ENCODE measurements at regions of chr16 and their contacts with region 1.

Region 1: DNA sequence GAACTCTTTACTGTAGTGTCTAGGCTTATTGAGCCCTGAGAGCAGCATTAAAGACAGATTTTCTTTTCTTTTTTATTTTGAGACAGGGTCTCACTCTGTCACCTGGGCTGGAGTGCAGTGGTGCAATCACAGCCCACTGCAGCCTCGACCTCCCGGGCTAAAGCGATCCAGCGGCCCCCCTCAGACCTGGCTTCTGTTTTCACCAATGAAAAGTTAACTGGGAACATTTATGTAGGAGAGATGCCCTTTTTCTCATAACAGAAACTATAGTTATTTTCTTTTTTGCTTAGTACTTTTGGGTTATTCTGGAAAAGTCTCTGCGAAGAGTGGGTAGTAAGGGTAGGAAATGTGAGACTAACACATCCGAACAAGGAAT is 1.5 kb downstream of the MAP1LC3B start:
- DNase-seq: no peak
- ATAC-seq: no peak
- H3K4me3 ChIP-seq: peak overlapping the region in 4 of 5 experiments; percentile 57 to 79 (median 70)
- H3K4me3 Mint-ChIP-seq: peak overlapping the region; percentile 94
- H3K27ac ChIP-seq: peak overlapping the region in 1 of 2 donors; percentile 95
- H3K27ac Mint-ChIP-seq: peak overlapping the region; percentile 91
- H3K4me1 ChIP-seq: peaks cover 28 to 34% of the 10 kb centered on the region in 2 donors
- H3K4me1 Mint-ChIP-seq: peaks cover 46% of the 10 kb centered on the region
- H3K27me3 ChIP-seq: no peaks in the 10 kb centered on the region
- H3K27me3 Mint-ChIP-seq: no peaks in the 10 kb centered on the region
- CTCF ChIP-seq: no peak

Region 2: DNA sequence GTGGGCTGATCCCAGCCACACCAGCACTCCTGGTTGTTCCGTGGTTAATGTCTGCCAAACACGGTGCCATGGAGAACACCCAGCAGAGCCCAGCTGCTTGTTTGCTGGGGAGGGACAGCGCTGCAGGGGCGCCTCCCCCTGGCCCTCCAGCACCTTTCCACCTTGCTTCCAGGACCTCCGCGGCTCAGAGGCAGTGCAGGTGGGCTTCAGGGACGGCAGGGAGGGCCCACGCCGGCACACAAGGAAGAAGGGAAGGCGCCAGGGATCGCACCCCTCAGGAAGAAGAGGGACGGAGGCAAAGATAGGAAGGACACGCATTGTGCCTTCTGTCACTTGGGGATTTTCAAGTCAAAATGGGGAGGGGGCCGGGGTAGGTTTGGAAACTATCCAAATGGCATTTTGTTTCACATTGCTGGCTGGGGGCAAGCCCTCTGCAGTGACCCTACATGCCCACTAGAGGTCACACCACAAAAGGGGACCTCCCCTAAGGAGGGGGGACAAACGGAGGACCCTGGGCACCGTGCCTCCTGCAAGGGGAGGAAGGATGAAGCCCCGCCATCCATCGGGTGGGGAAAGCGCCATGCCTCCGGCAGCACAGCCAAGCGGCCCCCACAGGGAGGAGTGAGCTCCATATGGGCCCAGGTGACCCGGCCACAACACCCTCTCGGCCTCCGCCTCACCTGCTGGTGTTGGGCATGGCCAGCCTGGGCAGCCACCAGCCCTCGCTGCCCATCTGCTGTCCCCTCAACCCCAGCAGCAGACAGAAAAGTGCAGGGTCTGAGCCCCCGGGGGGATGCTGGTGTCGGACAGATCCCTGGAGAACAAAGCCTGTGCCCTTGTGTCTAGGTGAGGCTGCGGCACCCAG is 69.0 kb before region 1 on chr16:
- CTCF ChIA-PET with region 1: interaction called, 47 read pairs
- POLR2A ChIA-PET with region 1: interaction called, 3 read pairs
- intact Hi-C with region 1: loop called (anchors 1 kb)
- DNase-seq: peak; percentile 69
- ATAC-seq: peak; percentile 94
- H3K4me3 ChIP-seq: no peak overlapping the region
- H3K4me3 Mint-ChIP-seq: no peak overlapping the region
- H3K27ac ChIP-seq: no peak overlapping the region
- H3K27ac Mint-ChIP-seq: no peak overlapping the region
- H3K4me1 ChIP-seq: peaks cover 0 to 4% of the 10 kb centered on the region in 2 donors
- H3K4me1 Mint-ChIP-seq: peaks cover 4% of the 10 kb centered on the region
- H3K27me3 ChIP-seq: no peaks in the 10 kb centered on the region
- H3K27me3 Mint-ChIP-seq: no peaks in the 10 kb centered on the region
- CTCF ChIP-seq: peak; percentile 88

Region 3: DNA sequence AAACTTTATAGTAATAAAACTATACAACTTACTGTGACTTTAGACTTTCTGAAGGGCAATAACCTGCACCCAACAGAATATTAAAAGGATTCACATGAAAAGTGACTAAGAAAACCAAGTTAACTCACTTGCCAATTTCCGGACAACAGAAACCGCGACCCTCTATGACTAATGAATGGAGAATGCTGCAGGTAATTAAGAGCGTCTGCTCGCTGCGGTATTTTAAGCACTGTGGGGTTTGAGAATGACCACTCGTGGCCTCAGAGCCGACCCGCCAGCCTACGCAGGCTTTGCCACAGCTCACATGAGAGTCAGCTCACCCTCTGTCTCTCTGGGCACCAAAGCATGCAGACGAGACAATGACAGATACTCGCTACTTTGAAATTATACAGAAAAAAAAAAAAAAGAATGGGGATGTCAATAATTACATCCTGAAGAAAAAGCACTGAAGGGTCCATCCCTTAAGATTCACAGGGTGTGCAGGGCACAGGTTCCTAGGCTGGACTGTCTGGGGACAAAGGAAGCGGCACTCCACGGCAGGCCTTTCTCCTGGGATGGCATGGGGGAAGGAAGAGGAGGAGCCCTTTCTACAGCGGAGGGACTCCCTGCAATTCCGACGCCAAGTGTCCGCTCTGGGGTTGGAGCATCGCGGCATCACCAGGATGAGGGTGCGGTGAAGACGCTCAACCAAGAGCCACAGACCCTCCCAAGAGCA is 64.2 kb after region 1 on chr16:
- CTCF ChIA-PET with region 1: no interaction called
- POLR2A ChIA-PET with region 1: no interaction called
- intact Hi-C with region 1: no loop called
- DNase-seq: no peak
- ATAC-seq: no peak
- H3K4me3 ChIP-seq: no peak overlapping the region
- H3K4me3 Mint-ChIP-seq: no peak overlapping the region
- H3K27ac ChIP-seq: no peak overlapping the region
- H3K27ac Mint-ChIP-seq: no peak overlapping the region
- H3K4me1 ChIP-seq: no peaks in the 10 kb centered on the region
- H3K4me1 Mint-ChIP-seq: peaks cover 2% of the 10 kb centered on the region
- H3K27me3 ChIP-seq: no peaks in the 10 kb centered on the region
- H3K27me3 Mint-ChIP-seq: no peaks in the 10 kb centered on the region
- CTCF ChIP-seq: no peak

Region 4: GRCh38 chr16:87855852-87856715 is 462.4 kb after region 1 on chr16:
- CTCF ChIA-PET with region 1: no interaction called
- POLR2A ChIA-PET with region 1: no interaction called
- intact Hi-C with region 1: no loop called
- DNase-seq: peak; percentile 47
- ATAC-seq: peak; percentile 59
- H3K4me3 ChIP-seq: peak overlapping the region in 3 of 5 experiments; percentile 1 to 43 (median 19)
- H3K4me3 Mint-ChIP-seq: peak overlapping the region; percentile 59
- H3K27ac ChIP-seq: peak overlapping the region; percentile 24 to 38
- H3K27ac Mint-ChIP-seq: peak overlapping the region; percentile 79
- H3K4me1 ChIP-seq: peaks cover 4 to 29% of the 10 kb centered on the region in 2 donors
- H3K4me1 Mint-ChIP-seq: peaks cover 28% of the 10 kb centered on the region
- H3K27me3 ChIP-seq: no peaks in the 10 kb centered on the region
- H3K27me3 Mint-ChIP-seq: no peaks in the 10 kb centered on the region
- CTCF ChIP-seq: no peak

Measured in B cell (primary cell).